Naive thymus-derived CD4-positive, alpha-beta T cell (primary cell): ENCODE measurements at regions of chr5 and their contacts with region 1.

Region 1: GRCh38 chr5:34007621-34008600 is at the start of gene AMACR:
- DNase-seq: peak; percentile 73 to 91 (median 81)
- ATAC-seq: peak; percentile 95
- H3K4me3 ChIP-seq: peak within 1 kb of the TSS; percentile 85
- H3K4me3 Mint-ChIP-seq: peak within 1 kb of the TSS; percentile 79 to 98 (median 94)
- H3K27ac ChIP-seq: peak within 1 kb of the TSS; percentile 83
- H3K27ac Mint-ChIP-seq: peak within 1 kb of the TSS; percentile 87 to 97 (median 96)
- H3K4me1 ChIP-seq: peaks cover 9 to 18% of the 10 kb centered on the region in 2 donors
- H3K4me1 Mint-ChIP-seq: peaks cover 23 to 39% (median 32%) of the 10 kb centered on the region in 7 donors
- H3K27me3 ChIP-seq: no peaks in the 10 kb centered on the region
- H3K27me3 Mint-ChIP-seq: no peaks in the 10 kb centered on the region
- total RNA-seq, gene AMACR: 2.7 to 8.3 (median 7.3) TPM

Region 2: DNA sequence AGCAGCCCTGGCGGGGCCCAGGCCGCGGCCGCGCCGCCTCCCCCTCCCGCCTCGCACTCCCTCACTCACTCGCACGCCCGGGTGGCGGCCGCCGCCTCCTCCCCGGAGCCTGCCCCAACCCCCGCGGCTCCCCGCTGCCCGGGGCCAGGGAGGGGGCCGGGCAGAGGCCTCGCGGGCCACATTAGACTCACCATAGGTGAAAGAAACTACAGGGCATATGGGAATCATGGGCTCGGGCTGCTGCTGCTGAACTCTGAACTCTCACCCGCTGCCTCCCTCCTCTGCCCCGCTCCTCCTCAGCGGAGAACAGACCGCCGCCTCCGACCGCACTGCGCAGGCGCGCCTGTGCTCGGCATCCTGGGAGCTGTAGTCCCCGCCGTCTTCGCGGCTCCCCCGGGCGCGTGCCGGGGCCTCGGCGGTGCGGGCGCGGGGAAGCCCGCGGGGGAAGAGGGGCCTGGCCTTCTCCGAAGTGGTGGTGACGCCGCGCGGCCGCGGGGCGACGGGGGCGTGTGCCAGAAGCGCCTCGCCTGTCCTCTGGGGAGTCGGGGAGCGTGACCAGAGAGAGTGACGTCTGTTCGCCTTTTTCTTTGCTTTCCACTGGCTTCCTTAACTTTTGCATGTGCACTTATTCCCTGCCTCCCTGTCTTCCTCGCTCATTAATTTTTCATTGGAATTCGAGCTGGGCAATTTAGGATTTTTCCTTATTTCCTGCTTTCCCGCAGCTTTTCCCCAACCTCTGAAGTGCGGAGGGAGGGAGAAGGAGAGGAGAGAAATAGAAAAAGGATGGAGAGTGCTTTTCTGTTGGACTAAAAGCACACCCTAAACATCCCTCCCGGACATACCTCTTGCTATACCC is 1563.3 kb before region 1 on chr5 and contains the start of gene ZFR:
- CTCF ChIA-PET with region 1: no interaction called
- POLR2A ChIA-PET with region 1: no interaction called
- intact Hi-C with region 1: loop called in 1 of 2 experiments (anchors 2 kb)
- DNase-seq: peak; percentile 91 to 95 (median 93)
- ATAC-seq: peak; percentile 95
- H3K4me3 ChIP-seq: peak within 1 kb of the TSS; percentile 67
- H3K4me3 Mint-ChIP-seq: peak within 1 kb of the TSS; percentile 79 to 94 (median 92)
- H3K27ac ChIP-seq: peak within 1 kb of the TSS; percentile 93
- H3K27ac Mint-ChIP-seq: peak within 1 kb of the TSS; percentile 75 to 96 (median 93)
- H3K4me1 ChIP-seq: peaks cover 16 to 20% of the 10 kb centered on the region in 2 donors
- H3K4me1 Mint-ChIP-seq: peaks cover 24 to 38% (median 33%) of the 10 kb centered on the region in 7 donors
- H3K27me3 ChIP-seq: no peaks in the 10 kb centered on the region
- H3K27me3 Mint-ChIP-seq: peaks cover 0 to 17% (median 0%) of the 10 kb centered on the region in 5 donors
- total RNA-seq, gene ZFR: 53.4 to 59.3 (median 58.0) TPM

Region 3: GRCh38 chr5:33409435-33410170 is 598.3 kb before region 1 on chr5:
- CTCF ChIA-PET with region 1: no interaction called
- POLR2A ChIA-PET with region 1: no interaction called
- intact Hi-C with region 1: no loop called
- DNase-seq: no peak
- ATAC-seq: no peak
- H3K4me3 ChIP-seq: no peak overlapping the region
- H3K4me3 Mint-ChIP-seq: no peak overlapping the region
- H3K27ac ChIP-seq: no peak overlapping the region
- H3K27ac Mint-ChIP-seq: no peak overlapping the region
- H3K4me1 ChIP-seq: no peaks in the 10 kb centered on the region
- H3K4me1 Mint-ChIP-seq: no peaks in the 10 kb centered on the region
- H3K27me3 ChIP-seq: no peaks in the 10 kb centered on the region
- H3K27me3 Mint-ChIP-seq: peaks cover 3 to 14% (median 8%) of the 10 kb centered on the region in 5 donors

Region 4: GRCh38 chr5:33997331-33997983 is 10.5 kb before region 1 on chr5:
- CTCF ChIA-PET with region 1: interaction called, 9 read pairs
- POLR2A ChIA-PET with region 1: interaction called, 10 read pairs
- intact Hi-C with region 1: loop called (anchors 1 kb)
- DNase-seq: peak in 7 of 9 donors; percentile 20 to 43 (median 40)
- ATAC-seq: peak; percentile 70
- H3K4me3 ChIP-seq: no peak overlapping the region
- H3K4me3 Mint-ChIP-seq: no peak overlapping the region
- H3K27ac ChIP-seq: no peak overlapping the region
- H3K27ac Mint-ChIP-seq: peak overlapping the region in 6 of 9 donors; percentile 4 to 84 (median 46)
- H3K4me1 ChIP-seq: no peaks in the 10 kb centered on the region
- H3K4me1 Mint-ChIP-seq: peaks cover 4 to 42% (median 6%) of the 10 kb centered on the region in 7 donors
- H3K27me3 ChIP-seq: no peaks in the 10 kb centered on the region
- H3K27me3 Mint-ChIP-seq: no peaks in the 10 kb centered on the region

Region 5: GRCh38 chr5:34022121-34022705 is 14.3 kb after region 1 on chr5:
- CTCF ChIA-PET with region 1: no interaction called
- POLR2A ChIA-PET with region 1: interaction called, 9 read pairs
- intact Hi-C with region 1: loop called (anchors 1 to 2 kb)
- DNase-seq: peak in 5 of 9 donors; percentile 20 to 35 (median 25)
- ATAC-seq: peak; percentile 52
- H3K4me3 ChIP-seq: no peak overlapping the region
- H3K4me3 Mint-ChIP-seq: peak overlapping the region; percentile 7 to 70 (median 36)
- H3K27ac ChIP-seq: peak overlapping the region; percentile 20
- H3K27ac Mint-ChIP-seq: peak overlapping the region; percentile 54 to 92 (median 82)
- H3K4me1 ChIP-seq: peaks cover 0 to 8% of the 10 kb centered on the region in 2 donors
- H3K4me1 Mint-ChIP-seq: peaks cover 17 to 30% (median 24%) of the 10 kb centered on the region in 7 donors
- H3K27me3 ChIP-seq: no peaks in the 10 kb centered on the region
- H3K27me3 Mint-ChIP-seq: no peaks in the 10 kb centered on the region

Region 6: DNA sequence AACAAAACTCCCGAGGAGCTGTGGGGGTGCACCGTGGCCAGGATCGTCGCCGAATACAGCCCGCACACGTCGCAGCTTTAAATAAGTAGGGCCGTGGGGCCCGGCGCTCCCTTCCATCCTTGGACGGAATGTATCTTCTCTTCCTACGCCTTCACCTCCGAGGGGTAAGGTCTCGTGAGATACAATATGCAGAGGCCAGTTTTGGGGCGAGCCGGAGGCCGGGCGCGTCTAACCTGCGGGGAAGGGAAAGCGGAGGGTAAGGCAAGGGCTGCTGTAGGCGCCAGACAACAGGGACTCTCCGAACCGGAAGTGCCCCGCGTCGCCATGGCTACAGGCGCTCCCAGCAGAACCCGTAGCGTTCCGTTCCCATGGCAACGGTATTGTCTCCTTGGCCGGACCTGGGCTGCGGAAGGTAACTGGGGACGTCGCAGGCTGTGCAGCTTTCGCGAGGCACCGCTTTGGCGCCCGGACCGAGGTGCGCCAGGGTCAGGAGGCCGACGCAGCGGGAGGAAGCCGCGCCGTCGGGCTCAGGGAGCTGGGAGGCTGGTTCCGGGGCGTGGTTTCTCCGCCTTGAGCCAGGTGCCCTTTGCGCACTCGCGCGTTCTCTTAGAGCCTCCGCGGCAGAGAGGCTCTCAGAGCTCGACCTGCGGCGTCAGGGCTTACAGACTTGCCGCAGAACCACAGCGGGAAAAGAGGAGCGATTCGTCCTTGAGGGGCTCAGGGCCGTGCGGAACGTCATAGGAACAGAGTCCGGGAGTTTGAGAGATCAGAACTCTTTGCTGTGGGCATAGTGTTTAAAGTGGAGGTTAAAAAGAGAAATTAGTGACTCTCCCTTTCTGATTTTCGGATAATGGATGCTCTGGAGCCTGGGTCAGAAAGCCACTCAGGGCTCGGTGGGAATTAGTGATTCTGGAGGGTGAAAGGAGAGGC is 831.1 kb after region 1 on chr5 and contains the start of gene TTC23L:
- CTCF ChIA-PET with region 1: no interaction called
- POLR2A ChIA-PET with region 1: no interaction called
- intact Hi-C with region 1: loop called (anchors 1 to 5 kb)
- DNase-seq: peak; percentile 82 to 95 (median 90)
- ATAC-seq: peak; percentile 94
- H3K4me3 ChIP-seq: peak within 1 kb of the TSS; percentile 85
- H3K4me3 Mint-ChIP-seq: peak within 1 kb of the TSS; percentile 79 to 97 (median 92)
- H3K27ac ChIP-seq: peak within 1 kb of the TSS; percentile 78
- H3K27ac Mint-ChIP-seq: peak within 1 kb of the TSS; percentile 83 to 99 (median 94)
- H3K4me1 ChIP-seq: peaks cover 0 to 4% of the 10 kb centered on the region in 2 donors
- H3K4me1 Mint-ChIP-seq: peaks cover 6 to 16% (median 10%) of the 10 kb centered on the region in 7 donors
- H3K27me3 ChIP-seq: no peaks in the 10 kb centered on the region
- H3K27me3 Mint-ChIP-seq: peaks cover 0 to 9% (median 0%) of the 10 kb centered on the region in 5 donors
- total RNA-seq, gene TTC23L: 0.57 to 1.9 (median 1.00) TPM in 3 of 5 experiments, not detected in the others

Region 7: GRCh38 chr5:34915139-34915855 is 907.4 kb after region 1 on chr5 and contains the starts of genes BRIX1 and RAD1:
- CTCF ChIA-PET with region 1: no interaction called
- POLR2A ChIA-PET with region 1: interaction called, 9 read pairs
- intact Hi-C with region 1: loop called (anchors 1 to 5 kb)
- DNase-seq: peak; percentile 86 to 95 (median 92)
- ATAC-seq: peak; percentile 99
- H3K4me3 ChIP-seq: peak within 1 kb of the TSS; percentile 99
- H3K4me3 Mint-ChIP-seq: peak within 1 kb of the TSS in 3 of 10 donors; percentile 56 to 80 (median 60)
- H3K27ac ChIP-seq: peak within 1 kb of the TSS; percentile 84
- H3K27ac Mint-ChIP-seq: peak within 1 kb of the TSS in 2 of 9 donors; percentile 59 to 69
- H3K4me1 ChIP-seq: peaks cover 19 to 34% of the 10 kb centered on the region in 2 donors
- H3K4me1 Mint-ChIP-seq: peaks cover 17 to 41% (median 35%) of the 10 kb centered on the region in 7 donors
- H3K27me3 ChIP-seq: no peaks in the 10 kb centered on the region
- H3K27me3 Mint-ChIP-seq: no peaks in the 10 kb centered on the region
- total RNA-seq, gene BRIX1: 13.4 to 45.2 (median 26.8) TPM
- total RNA-seq, gene RAD1: 19.3 to 29.6 (median 24.6) TPM

Region 8: DNA sequence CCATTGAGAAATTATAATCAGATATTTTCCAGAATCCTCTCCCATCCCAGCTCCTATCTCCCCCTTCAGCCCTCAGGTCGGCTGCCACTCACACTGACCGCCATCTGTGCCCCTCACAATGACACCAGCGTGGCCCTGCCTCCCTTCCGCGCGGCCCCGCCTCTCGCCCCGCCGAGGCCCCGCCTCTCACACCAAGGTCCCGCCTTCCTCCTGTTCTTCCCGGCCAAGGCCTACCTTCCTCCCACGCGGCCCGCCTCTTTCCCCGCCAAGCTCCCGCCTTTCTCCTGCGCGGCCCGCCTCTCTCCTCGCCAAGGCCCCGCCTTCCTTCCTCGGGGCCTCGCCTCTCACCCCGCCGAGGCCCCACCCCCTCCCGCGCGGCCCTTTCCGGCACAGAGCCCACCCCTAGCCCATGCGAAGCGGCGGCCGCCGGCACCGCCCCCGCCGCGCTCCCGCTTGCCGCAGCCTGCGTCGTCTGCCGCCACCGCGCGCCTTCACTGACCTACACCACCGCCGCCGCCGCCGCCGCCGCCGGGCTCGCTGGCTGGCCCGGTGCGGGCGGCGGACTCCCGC is 921.3 kb after region 1 on chr5 and contains the start of gene DNAJC21:
- CTCF ChIA-PET with region 1: no interaction called
- POLR2A ChIA-PET with region 1: interaction called, 5 read pairs
- intact Hi-C with region 1: loop called in 1 of 2 experiments (anchors 1 kb)
- DNase-seq: peak; percentile 93 to 99 (median 97)
- ATAC-seq: peak; percentile 93
- H3K4me3 ChIP-seq: peak within 1 kb of the TSS; percentile 75
- H3K4me3 Mint-ChIP-seq: peak within 1 kb of the TSS; percentile 94 to 99 (median 96)
- H3K27ac ChIP-seq: peak within 1 kb of the TSS; percentile 93
- H3K27ac Mint-ChIP-seq: peak within 1 kb of the TSS; percentile 86 to 98 (median 94)
- H3K4me1 ChIP-seq: peaks cover 15 to 18% of the 10 kb centered on the region in 2 donors
- H3K4me1 Mint-ChIP-seq: peaks cover 19 to 44% (median 36%) of the 10 kb centered on the region in 7 donors
- H3K27me3 ChIP-seq: no peaks in the 10 kb centered on the region
- H3K27me3 Mint-ChIP-seq: no peaks in the 10 kb centered on the region
- total RNA-seq, gene DNAJC21: 43.9 to 66.4 (median 49.6) TPM

Region 9: DNA sequence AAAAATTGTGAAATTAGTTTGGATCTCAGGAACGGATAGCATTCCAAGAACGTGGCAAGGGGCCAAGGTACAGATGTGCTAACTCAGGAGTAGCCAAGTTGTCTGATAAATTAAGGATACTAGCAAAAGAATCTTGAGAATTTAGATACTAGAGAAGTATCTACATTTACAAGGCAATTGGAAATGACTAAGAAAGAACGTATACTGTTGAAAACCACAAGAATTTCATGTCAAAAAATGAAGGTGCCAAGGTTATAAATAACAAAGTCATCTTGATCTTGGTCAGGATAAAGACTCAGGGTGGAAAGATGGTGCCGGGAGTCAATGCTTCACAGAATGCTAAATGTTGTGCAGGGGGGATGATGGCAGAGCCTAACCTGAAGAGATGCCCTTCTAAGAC is 1911.3 kb after region 1 on chr5:
- CTCF ChIA-PET with region 1: no interaction called
- POLR2A ChIA-PET with region 1: no interaction called
- intact Hi-C with region 1: no loop called
- DNase-seq: no peak
- ATAC-seq: no peak
- H3K4me3 ChIP-seq: no peak overlapping the region
- H3K4me3 Mint-ChIP-seq: peak overlapping the region in 1 of 10 donors; percentile 10
- H3K27ac ChIP-seq: no peak overlapping the region
- H3K27ac Mint-ChIP-seq: peak overlapping the region in 1 of 9 donors; percentile 12
- H3K4me1 ChIP-seq: peaks cover under 1 to 2% of the 10 kb centered on the region in 2 donors
- H3K4me1 Mint-ChIP-seq: peaks cover 7 to 34% (median 22%) of the 10 kb centered on the region in 7 donors
- H3K27me3 ChIP-seq: no peaks in the 10 kb centered on the region
- H3K27me3 Mint-ChIP-seq: no peaks in the 10 kb centered on the region